PC-9 (cell line): ENCODE measurements at regions of chr2 and their contacts with region 1.

Region 1: GRCh38 chr2:117917223-117917917 is 96.5 kb downstream of the CCDC93 start:
- DNase-seq: no peak
- H3K4me3 ChIP-seq: no peak overlapping the region
- H3K27ac ChIP-seq: no peak overlapping the region
- H3K4me1 ChIP-seq: no peaks in the 10 kb centered on the region
- H3K27me3 ChIP-seq: no peaks in the 10 kb centered on the region
- CTCF ChIP-seq: no peak; the same call in 1 of the 2 replicates

Region 2: DNA sequence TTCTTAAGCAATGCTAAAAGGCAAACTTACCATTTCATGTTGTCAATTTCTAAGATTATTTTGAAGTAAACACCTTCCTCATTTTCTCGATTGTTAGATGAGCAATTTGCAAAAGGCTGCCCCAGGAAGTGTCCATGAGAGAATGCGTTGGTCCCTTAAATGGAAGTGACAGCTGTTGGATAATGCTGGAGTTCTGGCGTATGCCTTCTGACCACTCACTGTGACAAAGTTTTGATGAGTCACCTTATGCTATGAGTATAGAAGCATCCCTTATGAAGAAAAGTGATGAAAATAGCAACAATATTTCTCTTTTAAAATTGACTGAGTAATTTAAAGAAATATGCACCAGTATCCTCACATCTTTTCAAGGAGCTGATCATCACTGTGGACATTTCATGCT is 1977.5 kb before region 1 on chr2:
- CTCF ChIA-PET with region 1: no interaction called
- POLR2A ChIA-PET with region 1: no interaction called
- intact Hi-C with region 1: no loop called
- DNase-seq: no peak
- H3K4me3 ChIP-seq: no peak overlapping the region
- H3K27ac ChIP-seq: no peak overlapping the region
- H3K4me1 ChIP-seq: no peaks in the 10 kb centered on the region
- H3K27me3 ChIP-seq: no peaks in the 10 kb centered on the region
- CTCF ChIP-seq: no peak

Region 3: DNA sequence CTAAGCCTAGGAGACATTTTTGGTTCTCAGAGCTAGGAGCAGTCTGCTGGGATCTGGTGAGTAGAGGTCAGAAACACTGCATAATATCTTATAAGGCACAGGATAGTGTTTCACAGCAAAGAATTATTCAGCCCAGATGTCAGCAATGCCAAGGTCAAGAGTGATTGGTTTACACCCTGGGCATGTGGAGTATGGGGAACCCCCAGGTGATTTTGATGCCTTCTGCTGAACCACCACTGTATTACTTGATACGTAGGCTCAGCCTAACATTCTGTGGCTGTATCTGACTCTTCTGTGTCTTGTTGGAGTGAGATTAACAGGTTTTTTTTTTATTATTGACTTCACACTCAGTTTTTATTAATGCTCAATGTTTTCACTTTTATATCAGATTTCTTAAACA is 96.9 kb before region 1 on chr2:
- CTCF ChIA-PET with region 1: no interaction called
- POLR2A ChIA-PET with region 1: no interaction called
- intact Hi-C with region 1: loop called (anchors 5 kb)
- DNase-seq: no peak
- H3K4me3 ChIP-seq: no peak overlapping the region
- H3K27ac ChIP-seq: no peak overlapping the region
- H3K4me1 ChIP-seq: peaks cover 14% of the 10 kb centered on the region
- H3K27me3 ChIP-seq: no peaks in the 10 kb centered on the region
- CTCF ChIP-seq: no peak